ENCODE measurements at regions of chr3 and their contacts with region 1.

Region 1: GRCh38 chr3:31768479-31769123 is 212.5 kb downstream of the OSBPL10 start:
- DNase-seq: peak; percentile 66
- H3K4me3 ChIP-seq: peak overlapping the region; percentile 51; the same call in 1 of the 2 replicates
- H3K27ac ChIP-seq: no peak overlapping the region
- H3K4me1 ChIP-seq: 0 out of 2 replicates have a peak, but pooled peaks cover 6% of the 10 kb centered on the region
- H3K27me3 ChIP-seq: no peaks in the 10 kb centered on the region

Region 2: GRCh38 chr3:30779686-30780287 is 988.8 kb before region 1 on chr3:
- in situ Hi-C with region 1: loop called (anchors 25 kb)
- DNase-seq: peak; percentile 53
- H3K4me3 ChIP-seq: no peak overlapping the region
- H3K27ac ChIP-seq: no peak overlapping the region
- H3K4me1 ChIP-seq: no peaks in the 10 kb centered on the region
- H3K27me3 ChIP-seq: no peaks in the 10 kb centered on the region

Region 3: DNA sequence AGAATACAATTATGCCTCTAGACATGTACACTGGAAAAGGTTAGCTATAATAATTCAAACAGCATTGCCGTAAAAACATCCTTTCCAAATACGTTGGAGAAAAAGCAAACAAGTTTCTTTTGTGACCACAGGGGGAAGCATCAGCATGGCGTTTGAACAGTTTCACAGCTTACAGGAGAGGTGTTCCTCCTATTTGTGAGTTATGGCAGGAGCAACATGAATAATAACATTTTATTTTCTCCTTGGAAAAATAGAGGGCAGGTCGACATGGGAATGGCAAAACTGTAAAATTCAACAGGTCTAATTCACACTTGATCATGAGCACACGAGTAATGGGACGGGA is 834.4 kb before region 1 on chr3:
- in situ Hi-C with region 1: loop called (anchors 25 kb)
- DNase-seq: peak; percentile 75
- H3K4me3 ChIP-seq: peak overlapping the region; percentile 15; the same call in 1 of the 2 replicates
- H3K27ac ChIP-seq: no peak overlapping the region
- H3K4me1 ChIP-seq: peaks cover 9% of the 10 kb centered on the region
- H3K27me3 ChIP-seq: no peaks in the 10 kb centered on the region

Region 4: DNA sequence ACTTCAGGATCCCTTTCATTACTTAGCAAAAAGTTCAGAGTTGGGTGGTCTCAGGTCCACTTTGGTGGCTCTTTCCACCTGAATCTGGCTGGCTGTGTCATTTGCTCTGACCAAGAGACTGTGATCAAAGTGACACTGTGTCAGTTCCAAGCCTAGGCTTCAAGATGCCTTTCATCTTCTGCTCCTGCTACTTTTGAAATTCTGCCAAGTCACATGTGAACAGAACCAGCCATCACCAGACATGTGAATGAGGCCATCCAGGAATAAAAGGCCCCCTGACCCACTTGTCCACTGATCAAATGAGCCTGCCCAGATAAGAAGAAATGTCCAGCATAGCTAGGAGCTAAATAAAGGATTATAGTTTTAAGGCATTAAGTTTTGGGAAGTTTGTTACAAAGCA is 80.3 kb after region 1 on chr3:
- in situ Hi-C with region 1: no loop called
- DNase-seq: no peak
- H3K4me3 ChIP-seq: no peak overlapping the region
- H3K27ac ChIP-seq: no peak overlapping the region
- H3K4me1 ChIP-seq: no peaks in the 10 kb centered on the region
- H3K27me3 ChIP-seq: no peaks in the 10 kb centered on the region

Measured in GM23248 (cell line).